ENCODE measurements at regions of chr20 and their contacts with region 1.

Region 1: DNA sequence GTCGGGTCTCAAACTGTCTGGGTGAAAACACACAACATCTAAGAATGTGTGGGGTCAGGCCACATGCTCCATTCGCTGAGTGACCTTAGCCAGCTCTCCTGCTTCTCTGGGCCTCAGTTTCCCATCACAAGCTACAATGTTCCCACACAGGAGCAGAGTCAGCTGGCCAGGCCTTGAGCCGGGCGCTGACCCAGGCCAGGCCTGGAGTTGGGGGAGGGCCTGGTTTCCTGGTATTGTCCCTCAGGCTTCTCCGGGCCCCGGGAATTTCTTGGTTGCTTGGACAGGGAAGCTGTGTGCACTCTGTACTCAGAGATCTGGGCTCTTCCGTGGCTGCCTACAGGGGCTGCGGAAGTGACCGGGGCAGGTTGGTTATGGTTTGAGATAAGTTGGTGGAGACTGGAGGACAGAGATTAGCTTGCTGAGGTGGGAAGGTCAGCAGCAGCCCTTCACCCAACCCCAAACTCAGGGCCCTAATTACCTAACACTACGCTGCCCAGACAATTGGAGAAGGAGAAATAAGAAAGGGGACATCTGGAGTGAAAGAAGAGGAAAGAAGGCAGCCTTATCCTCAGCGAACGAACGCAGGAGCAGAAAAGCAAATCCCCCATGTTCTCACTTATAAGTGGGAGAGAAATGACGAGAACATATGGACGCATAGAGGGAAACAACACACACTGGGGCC is 6.3 kb downstream of the TGM2 start:
- DNase-seq: peak; percentile 99
- H3K4me3 ChIP-seq: no peak overlapping the region
- H3K27ac ChIP-seq: peak overlapping the region; percentile 96
- H3K4me1 ChIP-seq: peaks cover 89% of the 10 kb centered on the region
- H3K27me3 ChIP-seq: no peaks in the 10 kb centered on the region
- CTCF ChIP-seq: no peak
- POLR2A ChIP-seq: no peak

Region 2: GRCh38 chr20:38084400-38084951 is 74.3 kb before region 1 on chr20:
- CTCF ChIA-PET with region 1: no interaction called
- POLR2A ChIA-PET with region 1: no interaction called
- dilution Hi-C with region 1: no loop called
- intact Hi-C with region 1: loop called (anchors 2 kb)
- DNase-seq: peak; percentile 91
- H3K4me3 ChIP-seq: no peak overlapping the region
- H3K27ac ChIP-seq: peak overlapping the region; percentile 63
- H3K4me1 ChIP-seq: peaks cover 21% of the 10 kb centered on the region
- H3K27me3 ChIP-seq: no peaks in the 10 kb centered on the region
- CTCF ChIP-seq: no peak
- POLR2A ChIP-seq: no peak

Region 3: GRCh38 chr20:38143646-38144554 is 14.9 kb before region 1 on chr20:
- CTCF ChIA-PET with region 1: interaction called, 16 read pairs
- POLR2A ChIA-PET with region 1: interaction called, 12 read pairs
- dilution Hi-C with region 1: no loop called
- intact Hi-C with region 1: no loop called
- DNase-seq: peak; percentile 96
- H3K4me3 ChIP-seq: no peak overlapping the region
- H3K27ac ChIP-seq: peak overlapping the region; percentile 93
- H3K4me1 ChIP-seq: peaks cover 87% of the 10 kb centered on the region
- H3K27me3 ChIP-seq: no peaks in the 10 kb centered on the region
- CTCF ChIP-seq: no peak
- POLR2A ChIP-seq: peak; percentile 69

Region 4: GRCh38 chr20:38196592-38196991 is 37.8 kb after region 1 on chr20:
- CTCF ChIA-PET with region 1: no interaction called
- POLR2A ChIA-PET with region 1: no interaction called
- dilution Hi-C with region 1: no loop called
- intact Hi-C with region 1: no loop called
- DNase-seq: no peak
- H3K4me3 ChIP-seq: no peak overlapping the region
- H3K27ac ChIP-seq: no peak overlapping the region
- H3K4me1 ChIP-seq: no peaks in the 10 kb centered on the region
- H3K27me3 ChIP-seq: no peaks in the 10 kb centered on the region
- CTCF ChIP-seq: no peak
- POLR2A ChIP-seq: no peak

Measured in endothelial cell of umbilical vein (primary cell).